ENCODE measurements at regions of chr10 and their contacts with region 1.

Region 1: DNA sequence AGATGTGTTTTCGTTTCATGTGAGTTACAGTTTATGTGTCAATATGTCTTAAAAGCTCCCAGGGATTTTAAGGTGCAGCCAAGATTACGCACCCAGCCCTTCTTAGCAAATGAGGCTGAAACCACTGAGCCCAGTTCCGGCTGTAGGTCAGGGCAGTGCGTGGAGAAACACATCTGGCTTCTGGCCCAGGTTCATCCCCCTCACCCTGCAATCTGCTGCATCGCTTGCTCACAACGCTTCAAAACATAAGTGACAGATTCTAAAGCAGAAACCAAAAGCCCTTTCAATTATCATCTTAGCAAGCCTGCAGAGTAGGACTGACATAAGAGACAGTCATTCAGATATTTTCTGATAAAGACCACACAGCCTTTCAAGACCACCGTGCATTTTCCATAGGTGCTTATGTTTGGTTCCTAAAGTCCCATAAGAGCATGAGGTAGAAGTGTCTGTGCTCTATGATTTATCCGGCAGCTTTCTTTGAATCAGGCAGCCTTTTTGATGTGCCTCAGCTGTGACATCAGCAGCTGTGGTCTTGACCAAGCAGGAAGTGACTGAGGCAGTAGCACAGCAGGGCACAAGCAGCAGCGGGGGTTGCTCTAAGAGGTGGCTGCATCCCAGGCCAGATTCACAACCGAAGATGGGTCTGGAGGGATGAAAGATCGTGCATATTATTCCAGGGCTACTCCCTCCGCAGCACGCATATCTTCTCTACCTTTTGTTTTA is 72.1 kb upstream of the LYZL2 start:
- DNase-seq: peak; percentile 93
- ATAC-seq: peak; percentile 73
- H3K4me3 Mint-ChIP-seq: peak overlapping the region; percentile 86
- H3K27ac Mint-ChIP-seq: peak overlapping the region; percentile 90
- H3K4me1 Mint-ChIP-seq: peaks cover 87% of the 10 kb centered on the region
- H3K27me3 Mint-ChIP-seq: no peaks in the 10 kb centered on the region

Region 2: DNA sequence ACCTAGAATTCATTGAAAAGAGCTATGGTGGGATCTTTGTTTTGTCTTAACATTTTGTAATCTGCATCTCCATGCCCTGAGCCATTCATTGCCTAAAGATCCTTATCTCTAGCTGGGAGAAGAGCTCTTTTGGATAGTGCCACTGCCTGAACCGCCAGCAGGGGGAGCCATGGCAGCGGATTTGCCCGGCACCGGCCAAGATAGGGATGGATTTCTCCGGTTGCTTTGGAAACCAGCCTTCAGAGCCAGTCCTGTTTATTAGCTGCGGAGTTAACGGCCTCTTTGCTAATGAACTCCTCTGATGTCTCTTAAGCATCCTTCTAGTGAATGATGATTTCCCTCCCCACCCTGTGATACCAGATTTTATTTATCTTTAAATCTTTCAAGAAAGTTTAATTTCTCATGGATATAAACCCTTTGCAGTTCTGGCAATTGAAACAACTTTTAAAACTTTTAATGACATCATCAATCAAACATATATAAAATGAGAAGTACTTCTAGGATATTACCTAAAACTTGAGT is 13.9 kb before region 1 on chr10:
- CTCF ChIA-PET with region 1: interaction called, 62 read pairs
- POLR2A ChIA-PET with region 1: interaction called, 16 read pairs
- intact Hi-C with region 1: loop called (anchors 1 kb)
- DNase-seq: peak; percentile 90
- ATAC-seq: peak; percentile 58
- H3K4me3 Mint-ChIP-seq: peak overlapping the region; percentile 43
- H3K27ac Mint-ChIP-seq: peak overlapping the region; percentile 75
- H3K4me1 Mint-ChIP-seq: peaks cover 70% of the 10 kb centered on the region
- H3K27me3 Mint-ChIP-seq: peaks cover 13% of the 10 kb centered on the region

Region 3: DNA sequence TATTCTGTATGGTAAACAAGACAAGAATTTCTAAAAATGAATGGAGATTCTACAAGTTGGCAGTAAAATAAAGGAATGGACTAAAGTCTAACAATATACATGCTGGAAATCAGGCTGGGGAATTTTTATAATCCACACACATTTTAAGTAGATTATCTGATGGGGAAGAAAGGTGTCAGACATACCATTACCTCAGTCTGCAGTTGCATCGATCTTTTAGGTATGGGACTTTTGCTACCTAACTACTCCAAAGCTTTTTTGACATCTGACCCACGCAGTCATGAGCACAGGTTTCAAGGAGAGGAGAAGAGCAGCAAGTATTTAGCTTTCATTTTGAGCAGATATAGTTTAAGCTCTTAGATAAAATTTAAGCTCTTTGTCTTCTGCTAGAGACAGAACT is 217.0 kb after region 1 on chr10:
- CTCF ChIA-PET with region 1: no interaction called
- POLR2A ChIA-PET with region 1: no interaction called
- intact Hi-C with region 1: no loop called
- DNase-seq: no peak
- ATAC-seq: no peak
- H3K4me3 Mint-ChIP-seq: no peak overlapping the region
- H3K27ac Mint-ChIP-seq: no peak overlapping the region
- H3K4me1 Mint-ChIP-seq: no peaks in the 10 kb centered on the region
- H3K27me3 Mint-ChIP-seq: no peaks in the 10 kb centered on the region

Region 4: GRCh38 chr10:31101123-31101522 is 399.5 kb after region 1 on chr10:
- CTCF ChIA-PET with region 1: no interaction called
- POLR2A ChIA-PET with region 1: no interaction called
- intact Hi-C with region 1: loop called in 1 of 2 experiments (anchors 1 kb)
- DNase-seq: peak; percentile 86
- ATAC-seq: peak; percentile 96
- H3K4me3 Mint-ChIP-seq: no peak overlapping the region
- H3K27ac Mint-ChIP-seq: peak overlapping the region; percentile 91
- H3K4me1 Mint-ChIP-seq: peaks cover 44% of the 10 kb centered on the region
- H3K27me3 Mint-ChIP-seq: no peaks in the 10 kb centered on the region

Region 5: GRCh38 chr10:31707093-31708039 is 1005.8 kb after region 1 on chr10:
- CTCF ChIA-PET with region 1: no interaction called
- POLR2A ChIA-PET with region 1: no interaction called
- intact Hi-C with region 1: loop called in 1 of 2 experiments (anchors 2 kb)
- DNase-seq: peak; percentile 81
- ATAC-seq: peak; percentile 95
- H3K4me3 Mint-ChIP-seq: no peak overlapping the region
- H3K27ac Mint-ChIP-seq: peak overlapping the region; percentile 83
- H3K4me1 Mint-ChIP-seq: peaks cover 24% of the 10 kb centered on the region
- H3K27me3 Mint-ChIP-seq: no peaks in the 10 kb centered on the region

Region 6: GRCh38 chr10:31745612-31746376 is 1044.2 kb after region 1 on chr10:
- CTCF ChIA-PET with region 1: no interaction called
- POLR2A ChIA-PET with region 1: interaction called, 3 read pairs
- intact Hi-C with region 1: loop called in 1 of 2 experiments (anchors 5 kb)
- DNase-seq: peak; percentile 75
- ATAC-seq: peak; percentile 98
- H3K4me3 Mint-ChIP-seq: no peak overlapping the region
- H3K27ac Mint-ChIP-seq: peak overlapping the region; percentile 91
- H3K4me1 Mint-ChIP-seq: peaks cover 34% of the 10 kb centered on the region
- H3K27me3 Mint-ChIP-seq: no peaks in the 10 kb centered on the region

Region 7: DNA sequence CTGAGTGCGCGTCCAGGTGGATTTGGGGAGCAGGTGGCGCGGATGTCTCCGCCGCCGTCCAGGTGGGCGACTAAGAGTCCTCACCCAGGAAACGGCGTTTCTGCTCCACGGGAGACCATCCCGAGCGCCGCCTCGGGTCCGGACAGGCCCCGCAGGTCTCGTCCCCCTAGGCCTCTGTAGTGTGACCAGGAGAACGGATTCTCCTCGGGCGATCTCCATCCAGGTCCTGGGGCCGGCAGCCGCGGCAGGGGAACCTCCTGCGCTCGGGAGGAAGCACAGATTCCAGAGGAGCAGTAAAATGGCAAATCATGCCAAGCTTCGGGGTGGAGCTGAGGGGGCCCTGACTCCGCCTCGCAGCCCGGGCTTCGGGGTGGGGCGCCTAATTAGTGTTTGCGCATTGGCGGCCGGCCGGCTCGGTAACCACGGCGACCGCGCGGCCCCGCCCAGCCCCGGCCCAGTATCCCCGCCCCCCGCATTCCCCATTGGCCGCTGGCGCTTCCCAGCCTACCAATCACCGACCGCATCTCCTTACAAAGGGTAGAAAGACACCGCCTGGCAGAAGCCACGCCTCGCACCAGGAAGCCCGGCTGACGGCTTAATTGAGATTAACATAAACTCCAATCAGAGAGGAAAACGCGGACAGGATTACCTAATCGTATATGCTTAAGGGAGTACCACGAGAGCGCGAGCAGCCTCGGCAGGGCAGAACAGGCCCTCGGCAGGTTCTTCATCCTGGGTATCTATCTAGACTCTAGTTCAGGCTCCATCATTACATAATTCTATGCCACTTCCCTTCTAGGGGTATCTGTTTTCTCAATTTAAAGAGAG is 1058.4 kb after region 1 on chr10:
- CTCF ChIA-PET with region 1: no interaction called
- POLR2A ChIA-PET with region 1: no interaction called
- intact Hi-C with region 1: loop called in 1 of 2 experiments (anchors 1 kb)
- DNase-seq: peak; percentile 97
- ATAC-seq: peak; percentile 94
- H3K4me3 Mint-ChIP-seq: peak overlapping the region; percentile 91
- H3K27ac Mint-ChIP-seq: peak overlapping the region; percentile 94
- H3K4me1 Mint-ChIP-seq: peaks cover 15% of the 10 kb centered on the region
- H3K27me3 Mint-ChIP-seq: no peaks in the 10 kb centered on the region

Region 8: GRCh38 chr10:32318476-32318896 is 1616.9 kb after region 1 on chr10:
- CTCF ChIA-PET with region 1: no interaction called
- POLR2A ChIA-PET with region 1: no interaction called
- intact Hi-C with region 1: loop called in 1 of 2 experiments (anchors 10 kb)
- DNase-seq: peak; percentile 38
- ATAC-seq: peak; percentile 71
- H3K4me3 Mint-ChIP-seq: peak overlapping the region; percentile 1
- H3K27ac Mint-ChIP-seq: peak overlapping the region; percentile 69
- H3K4me1 Mint-ChIP-seq: peaks cover 87% of the 10 kb centered on the region
- H3K27me3 Mint-ChIP-seq: no peaks in the 10 kb centered on the region